K562 (cell line): ENCODE measurements at regions of chr2 and their contacts with region 1.

Region 1: DNA sequence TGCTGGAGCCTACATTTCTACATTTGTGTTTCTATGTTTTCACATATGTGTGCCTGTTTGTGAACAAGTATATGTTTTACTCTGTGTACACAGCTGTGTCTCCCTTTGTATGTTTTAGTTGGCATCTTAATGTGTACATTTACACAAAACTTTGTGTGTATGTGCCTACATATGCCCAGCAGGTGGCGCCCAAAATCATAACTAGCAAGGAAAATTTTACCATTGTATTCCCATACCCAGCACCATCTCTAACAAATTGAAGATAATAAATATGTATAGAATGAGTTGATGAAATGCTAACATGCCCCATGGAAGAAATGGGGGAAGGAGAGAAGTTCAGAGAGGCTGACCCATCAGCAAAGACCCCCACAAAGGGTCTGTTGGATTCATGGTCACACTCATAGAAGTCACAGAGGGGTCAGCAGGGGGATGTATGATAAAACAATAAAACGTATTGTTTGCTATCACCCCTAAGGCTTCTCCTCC is 48.1 kb downstream of the PKDCC start:
- DNase-seq: peak; percentile 39 to 76 (median 42)
- ATAC-seq: peak; percentile 87
- H3K4me3 ChIP-seq: no peak overlapping the region
- H3K27ac ChIP-seq: no peak overlapping the region
- H3K4me1 ChIP-seq: no peaks in the 10 kb centered on the region; a peak in 2 of 5 replicates
- H3K27me3 ChIP-seq: peaks cover 0 to 2% of the 10 kb centered on the region in 2 experiments; a peak in 1 of 5 replicates
- CTCF ChIP-seq: peak; percentile 69 to 87 (median 70)
- EP300 ChIP-seq: no peak
- POLR2A ChIP-seq: no peak
- RAD21 ChIP-seq: peak; percentile 95 to 97

Region 2: GRCh38 chr2:41668529-41668928 is 427.4 kb before region 1 on chr2:
- CTCF ChIA-PET with region 1: no interaction called
- POLR2A ChIA-PET with region 1: no interaction called
- in situ Hi-C with region 1: no loop called
- intact Hi-C with region 1: no loop called
- DNase-seq: no peak
- ATAC-seq: no peak
- H3K4me3 ChIP-seq: no peak overlapping the region
- H3K27ac ChIP-seq: no peak overlapping the region
- H3K4me1 ChIP-seq: no peaks in the 10 kb centered on the region
- H3K27me3 ChIP-seq: no peaks in the 10 kb centered on the region
- CTCF ChIP-seq: no peak
- EP300 ChIP-seq: no peak
- POLR2A ChIP-seq: no peak
- RAD21 ChIP-seq: no peak

Region 3: DNA sequence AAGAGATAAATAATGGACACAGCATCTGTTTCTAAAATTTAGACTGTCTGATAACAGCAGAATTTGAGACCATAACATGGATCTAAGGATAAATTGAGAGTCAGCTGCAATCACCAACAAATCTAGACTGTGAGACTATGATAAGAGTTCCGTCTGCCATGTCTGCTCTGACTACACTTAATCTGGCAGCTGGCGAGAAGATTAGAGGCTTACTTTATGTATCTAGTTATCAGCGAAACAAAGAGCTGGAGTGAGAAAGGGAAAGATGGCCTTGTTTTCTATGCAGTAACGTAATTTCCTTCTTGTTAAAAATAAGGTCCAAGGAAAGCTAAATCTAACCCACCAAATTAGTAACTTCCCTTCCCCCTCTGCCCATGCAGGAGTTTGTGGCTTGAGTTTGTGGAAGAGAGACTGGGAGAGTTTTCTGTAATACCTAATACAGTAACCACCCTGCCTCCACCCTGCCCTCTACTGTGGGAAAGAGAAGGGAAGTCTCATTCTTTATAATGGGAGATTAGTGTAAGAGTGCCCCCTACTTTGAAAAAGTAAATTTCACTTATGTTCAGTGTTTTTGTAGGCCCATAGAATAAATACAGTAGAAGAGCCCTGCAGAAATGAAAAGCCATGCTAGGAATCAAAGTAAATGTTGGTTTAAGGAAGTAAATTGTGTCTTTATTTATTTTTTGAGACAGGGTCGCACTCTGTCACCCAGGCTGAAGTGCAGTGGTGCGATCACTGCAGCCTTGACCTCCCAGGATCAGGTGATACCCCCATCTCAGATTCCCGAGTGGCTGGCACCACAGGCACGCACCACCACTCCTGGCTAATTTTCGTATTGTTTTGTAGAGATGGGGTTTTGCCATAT is 100.7 kb after region 1 on chr2:
- CTCF ChIA-PET with region 1: interaction called, 39 read pairs
- POLR2A ChIA-PET with region 1: no interaction called
- in situ Hi-C with region 1: loop called (anchors 5 kb)
- intact Hi-C with region 1: loop called (anchors 1 kb)
- DNase-seq: peak; percentile 43 to 73 (median 60)
- ATAC-seq: peak; percentile 98
- H3K4me3 ChIP-seq: no peak overlapping the region
- H3K27ac ChIP-seq: peak overlapping the region; percentile 46; the same call in 1 of the 3 replicates
- H3K4me1 ChIP-seq: peaks cover 4 to 10% of the 10 kb centered on the region in 2 experiments; a peak in 3 of 5 replicates
- H3K27me3 ChIP-seq: no peaks in the 10 kb centered on the region
- CTCF ChIP-seq: peak; percentile 66 to 99 (median 98)
- EP300 ChIP-seq: peak; percentile 83; the same call in 1 of the 2 replicates
- POLR2A ChIP-seq: no peak
- RAD21 ChIP-seq: peak; percentile 92

Region 4: GRCh38 chr2:42238644-42239288 is 142.8 kb after region 1 on chr2:
- CTCF ChIA-PET with region 1: interaction called, 15 read pairs
- POLR2A ChIA-PET with region 1: interaction called, 5 read pairs
- in situ Hi-C with region 1: loop called (anchors 5 kb)
- intact Hi-C with region 1: loop called (anchors 1 kb)
- DNase-seq: peak in 1 of 4 experiments; percentile 68
- ATAC-seq: peak; percentile 99
- H3K4me3 ChIP-seq: no peak overlapping the region
- H3K27ac ChIP-seq: no peak overlapping the region
- H3K4me1 ChIP-seq: peaks cover 0 to 8% of the 10 kb centered on the region in 2 experiments; a peak in 2 of 5 replicates
- H3K27me3 ChIP-seq: no peaks in the 10 kb centered on the region
- CTCF ChIP-seq: peak; percentile 60 to 72 (median 66)
- EP300 ChIP-seq: no peak
- POLR2A ChIP-seq: no peak
- RAD21 ChIP-seq: peak; percentile 81 to 87

Region 5: DNA sequence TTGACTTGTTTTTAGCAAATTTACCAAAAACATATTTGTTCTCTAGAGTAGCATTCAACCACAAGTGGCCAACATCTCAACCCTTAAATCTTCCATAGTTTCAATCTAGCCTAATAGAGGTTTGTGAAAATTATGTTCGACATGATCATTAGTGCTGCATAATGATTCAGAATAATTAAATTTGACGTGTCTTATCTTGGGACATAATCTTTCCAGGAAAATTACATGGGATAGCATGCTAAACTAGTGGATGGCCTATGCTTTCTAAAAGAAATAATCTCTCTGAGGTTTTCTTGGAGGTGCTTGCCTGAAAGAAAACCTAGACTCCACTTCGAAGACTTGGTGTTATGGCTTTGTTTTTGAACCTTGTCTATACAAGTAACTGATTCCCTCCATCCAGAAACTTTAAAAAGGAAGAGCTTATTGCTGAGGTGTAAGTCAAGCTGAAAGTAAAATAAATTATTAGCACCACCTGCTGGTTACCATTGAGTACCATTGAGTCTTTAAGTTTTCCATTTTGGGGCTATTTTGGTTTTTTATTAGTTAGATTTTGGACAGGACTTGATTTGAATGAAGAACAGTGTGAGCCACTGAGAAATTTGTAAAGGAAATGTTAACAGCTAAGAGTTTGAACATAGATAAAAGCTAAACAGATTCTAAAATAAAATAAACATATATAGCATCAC is 232.3 kb after region 1 on chr2:
- CTCF ChIA-PET with region 1: interaction called, 7 read pairs
- POLR2A ChIA-PET with region 1: no interaction called
- in situ Hi-C with region 1: loop called (anchors 10 kb)
- intact Hi-C with region 1: loop called (anchors 1 kb)
- DNase-seq: peak in 2 of 4 experiments; percentile 17 to 22
- ATAC-seq: peak; percentile 64
- H3K4me3 ChIP-seq: no peak overlapping the region
- H3K27ac ChIP-seq: no peak overlapping the region
- H3K4me1 ChIP-seq: peaks cover 0 to 9% of the 10 kb centered on the region in 2 experiments; a peak in 2 of 5 replicates
- H3K27me3 ChIP-seq: no peaks in the 10 kb centered on the region
- CTCF ChIP-seq: peak; percentile 18 to 63 (median 36); a peak in 4 of 6 replicates
- EP300 ChIP-seq: no peak
- POLR2A ChIP-seq: no peak
- RAD21 ChIP-seq: peak in 1 of 2 experiments; percentile 53; a peak in 3 of 4 replicates

Region 6: GRCh38 chr2:42360890-42361727 is 265.1 kb after region 1 on chr2 and contains the start of gene COX7A2L:
- CTCF ChIA-PET with region 1: interaction called, 3 read pairs
- POLR2A ChIA-PET with region 1: no interaction called
- in situ Hi-C with region 1: no loop called
- intact Hi-C with region 1: loop called (anchors 5 kb)
- DNase-seq: peak; percentile 96 to 99 (median 98)
- ATAC-seq: peak; percentile 93
- H3K4me3 ChIP-seq: peak within 1 kb of the TSS; percentile 99
- H3K27ac ChIP-seq: peak within 1 kb of the TSS; percentile 97
- H3K4me1 ChIP-seq: peaks cover 13 to 27% of the 10 kb centered on the region in 2 experiments; a peak in 4 of 5 replicates
- H3K27me3 ChIP-seq: peaks cover 3 to 11% of the 10 kb centered on the region in 2 experiments; a peak in 4 of 5 replicates
- CTCF ChIP-seq: peak in 2 of 3 experiments; percentile 37 to 61; a peak in 4 of 6 replicates
- EP300 ChIP-seq: 0 out of 2 replicates have a peak, but pooled peaks have one; percentile 13
- POLR2A ChIP-seq: peak; percentile 86
- RAD21 ChIP-seq: peak; percentile 43 to 52; a peak in 3 of 4 replicates
- polyA plus RNA-seq, gene COX7A2L: 366 to 481 TPM